Psoas muscle (tissue), 8 donors: ENCODE measurements at regions of chr3 and their contacts with region 1.

Region 1: GRCh38 chr3:184250167-184250828 is 826 bp downstream of the EEF1AKMT4 start:
- DNase-seq: peak; percentile 87 to 91
- ATAC-seq: peak; percentile 80 to 85 (median 82)
- H3K4me3 ChIP-seq: peak overlapping the region; percentile 79
- H3K27ac ChIP-seq: peak overlapping the region; percentile 90
- H3K4me1 ChIP-seq: peaks cover 15% of the 10 kb centered on the region
- H3K27me3 ChIP-seq: no peaks in the 10 kb centered on the region
- CTCF ChIP-seq: peak; percentile 95

Region 2: GRCh38 chr3:184154885-184155643 is 95.2 kb before region 1 on chr3 and contains the start of gene DVL3:
- intact Hi-C with region 1: loop called (anchors 5 to 10 kb)
- DNase-seq: peak; percentile 80 to 90
- ATAC-seq: peak; percentile 84 to 91 (median 88)
- H3K4me3 ChIP-seq: peak within 1 kb of the TSS; percentile 84
- H3K27ac ChIP-seq: peak within 1 kb of the TSS; percentile 88
- H3K4me1 ChIP-seq: peaks cover 38% of the 10 kb centered on the region
- H3K27me3 ChIP-seq: no peaks in the 10 kb centered on the region
- CTCF ChIP-seq: no peak
- total RNA-seq, gene DVL3: 46.7 to 57.2 (median 47.7) TPM

Region 3: GRCh38 chr3:184185461-184186308 is 64.6 kb before region 1 on chr3 and contains the start of gene ABCF3:
- intact Hi-C with region 1: loop called (anchors 2 kb)
- DNase-seq: peak; percentile 99 to 100
- ATAC-seq: peak; percentile 96 to 98 (median 96)
- H3K4me3 ChIP-seq: peak within 1 kb of the TSS; percentile 93
- H3K27ac ChIP-seq: peak within 1 kb of the TSS; percentile 92
- H3K4me1 ChIP-seq: peaks cover 26% of the 10 kb centered on the region
- H3K27me3 ChIP-seq: no peaks in the 10 kb centered on the region
- CTCF ChIP-seq: no peak
- total RNA-seq, gene ABCF3: 44.1 to 93.0 (median 72.7) TPM